ENCODE measurements at regions of chr10 and their contacts with region 1.

Region 1: DNA sequence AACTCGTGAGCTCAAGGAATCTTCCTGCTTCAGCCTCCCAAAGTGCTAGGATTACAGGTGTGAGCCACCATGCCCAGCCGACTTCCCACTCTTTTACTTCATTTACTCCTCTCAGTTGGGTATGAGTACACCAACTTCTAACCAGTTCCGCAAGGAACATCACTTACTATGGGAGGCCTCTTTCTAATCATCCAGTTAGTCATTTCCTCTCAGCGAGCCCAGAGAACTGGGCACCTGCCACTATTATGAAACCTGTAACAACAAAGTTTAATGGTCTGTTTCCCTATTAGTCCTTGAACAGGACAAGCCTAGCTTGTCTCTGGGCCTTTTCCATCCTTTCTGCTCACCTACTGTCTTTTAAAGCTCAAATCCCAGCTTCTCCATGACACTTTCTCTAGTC is 88.8 kb downstream of the DNMBP start:
- DNase-seq: peak in 1 of 2 experiments; percentile 81
- H3K4me3 ChIP-seq: no peak overlapping the region
- H3K27ac ChIP-seq: peak overlapping the region; percentile 88
- H3K4me1 ChIP-seq: peaks cover 53% of the 10 kb centered on the region
- H3K27me3 ChIP-seq: no peaks in the 10 kb centered on the region
- CTCF ChIP-seq: no peak

Region 2: GRCh38 chr10:99450624-99451498 is 470.0 kb before region 1 on chr10:
- CTCF ChIA-PET with region 1: no interaction called
- POLR2A ChIA-PET with region 1: no interaction called
- intact Hi-C with region 1: no loop called
- DNase-seq: no peak
- H3K4me3 ChIP-seq: no peak overlapping the region
- H3K27ac ChIP-seq: no peak overlapping the region
- H3K4me1 ChIP-seq: no peaks in the 10 kb centered on the region
- H3K27me3 ChIP-seq: peaks cover 31% of the 10 kb centered on the region; the same call in 1 of the 2 replicates
- CTCF ChIP-seq: no peak

Region 3: DNA sequence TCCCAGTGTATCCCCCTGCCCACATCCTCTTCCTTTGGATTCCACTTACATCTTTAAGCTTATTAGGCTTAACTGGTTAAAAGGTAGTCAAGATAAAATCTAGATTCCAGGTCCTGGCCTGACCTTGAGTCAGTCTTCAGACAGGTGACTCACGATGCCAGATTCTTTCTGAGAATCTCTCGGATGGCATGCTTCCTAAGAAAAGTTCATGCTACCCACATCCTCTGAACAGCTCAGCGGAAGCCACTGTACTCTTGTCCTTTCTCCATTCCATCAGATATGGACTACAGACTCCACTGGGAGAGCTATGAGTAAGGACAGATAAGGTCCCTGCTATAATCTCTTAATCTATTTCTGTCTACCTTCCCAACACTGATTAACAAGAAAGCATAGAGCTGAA is 45.4 kb after region 1 on chr10:
- CTCF ChIA-PET with region 1: no interaction called
- POLR2A ChIA-PET with region 1: interaction called, 11 read pairs
- intact Hi-C with region 1: loop called (anchors 5 kb)
- DNase-seq: peak; percentile 59 to 95
- H3K4me3 ChIP-seq: no peak overlapping the region
- H3K27ac ChIP-seq: peak overlapping the region; percentile 81
- H3K4me1 ChIP-seq: peaks cover 35% of the 10 kb centered on the region
- H3K27me3 ChIP-seq: no peaks in the 10 kb centered on the region
- CTCF ChIP-seq: no peak

Measured in PC-9 (cell line).